ENCODE measurements at regions of chr4 and their contacts with region 1.

Region 1: DNA sequence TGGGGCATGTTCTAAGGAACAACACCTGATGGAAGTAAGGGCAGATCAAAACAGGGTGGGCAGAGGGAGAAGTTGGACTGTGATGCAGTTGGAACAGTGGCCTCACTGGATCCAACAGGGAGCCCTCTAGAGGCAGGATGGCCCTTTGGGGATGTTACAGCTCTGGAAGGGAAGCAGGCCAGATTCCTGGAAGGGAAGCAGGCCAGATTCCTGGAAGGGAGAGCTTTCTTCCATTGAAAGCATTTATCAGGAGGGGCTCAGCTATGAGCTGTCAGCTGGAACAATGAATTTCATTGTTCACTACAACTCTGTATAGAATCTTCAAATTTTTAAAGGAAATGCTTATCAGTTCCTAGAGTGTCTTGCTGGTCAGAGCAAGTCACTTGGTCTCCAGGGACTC is 17.7 kb downstream of the IL15 start:
- DNase-seq: peak; percentile 77

Region 2: DNA sequence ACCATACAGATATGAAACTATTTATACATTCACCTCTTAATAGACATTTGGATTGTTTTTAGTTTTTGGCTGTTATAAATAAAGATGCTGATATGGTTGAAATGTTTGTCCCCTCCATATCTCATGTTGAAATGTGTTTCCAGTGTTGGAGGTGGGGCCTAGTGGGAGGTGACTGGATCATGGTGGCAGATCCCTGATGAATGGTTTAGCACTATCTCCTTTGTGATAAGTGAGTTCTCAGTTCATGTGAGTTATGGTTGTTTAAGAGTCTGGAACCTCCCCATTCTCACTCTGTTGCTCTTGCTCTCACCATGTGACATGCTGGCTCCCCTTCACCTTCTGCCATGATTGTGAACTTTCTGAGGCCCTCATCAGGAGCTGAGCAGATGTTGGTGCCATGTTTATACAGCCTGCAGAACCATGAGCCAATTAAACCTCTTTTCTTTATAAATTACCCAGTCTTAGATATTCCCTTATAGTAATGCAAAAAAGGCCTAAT is 1214.4 kb before region 1 on chr4:
- intact Hi-C with region 1: no loop called
- DNase-seq: no peak

Region 3: GRCh38 chr4:141636082-141636770 is 17.9 kb before region 1 on chr4 and contains the start of gene IL15:
- intact Hi-C with region 1: loop called (anchors 2 kb)
- DNase-seq: peak; percentile 79
- total RNA-seq, gene IL15: 3.1 TPM